ENCODE measurements at regions of chr7 and their contacts with region 1.

Region 1: GRCh38 chr7:143240291-143241168 is 18.7 kb downstream of the TAS2R40 start:
- DNase-seq: no peak
- H3K4me3 ChIP-seq: no peak overlapping the region
- H3K27ac ChIP-seq: peak overlapping the region in 2 of 4 donors; percentile 40 to 72
- H3K4me1 ChIP-seq: peaks cover 0 to 11% (median 2%) of the 10 kb centered on the region in 3 donors
- H3K27me3 ChIP-seq: peaks cover 0 to 4% (median 0%) of the 10 kb centered on the region in 4 donors
- CTCF ChIP-seq: peak; percentile 86 to 92 (median 90)
- POLR2A ChIP-seq: no peak

Region 2: DNA sequence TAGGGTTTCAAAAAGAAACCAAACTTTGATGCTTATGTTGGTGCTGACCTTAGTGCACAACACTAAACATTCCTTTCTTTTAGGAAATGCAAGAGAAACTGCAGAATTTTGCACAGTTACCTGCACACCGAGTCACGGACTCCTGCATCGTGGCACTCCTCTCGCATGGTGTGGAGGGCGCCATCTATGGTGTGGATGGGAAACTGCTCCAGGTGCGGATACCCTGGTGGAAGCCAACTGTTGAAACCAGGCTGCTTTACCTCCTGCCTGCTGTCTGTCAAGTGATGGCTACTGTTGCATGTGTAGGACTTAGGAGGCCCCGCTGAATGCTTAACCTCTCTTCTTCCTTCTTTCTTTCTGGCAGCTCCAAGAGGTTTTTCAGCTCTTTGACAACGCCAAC is 59.3 kb after region 1 on chr7:
- intact Hi-C with region 1: loop called (anchors 5 kb)
- DNase-seq: no peak
- H3K4me3 ChIP-seq: no peak overlapping the region
- H3K27ac ChIP-seq: no peak overlapping the region
- H3K4me1 ChIP-seq: peaks cover 0 to 25% (median 2%) of the 10 kb centered on the region in 3 donors
- H3K27me3 ChIP-seq: no peaks in the 10 kb centered on the region
- CTCF ChIP-seq: peak in 5 of 6 experiments; percentile 36 to 61 (median 48)
- POLR2A ChIP-seq: no peak

Region 3: GRCh38 chr7:143416565-143417149 is 176.1 kb after region 1 on chr7:
- intact Hi-C with region 1: loop called (anchors 5 kb)
- DNase-seq: no peak
- H3K4me3 ChIP-seq: peak overlapping the region in 1 of 4 donors; percentile 6
- H3K27ac ChIP-seq: peak overlapping the region; percentile 70 to 82 (median 76)
- H3K4me1 ChIP-seq: peaks cover 5 to 62% (median 9%) of the 10 kb centered on the region in 3 donors
- H3K27me3 ChIP-seq: no peaks in the 10 kb centered on the region
- CTCF ChIP-seq: peak; percentile 70 to 85 (median 80)
- POLR2A ChIP-seq: no peak

Region 4: DNA sequence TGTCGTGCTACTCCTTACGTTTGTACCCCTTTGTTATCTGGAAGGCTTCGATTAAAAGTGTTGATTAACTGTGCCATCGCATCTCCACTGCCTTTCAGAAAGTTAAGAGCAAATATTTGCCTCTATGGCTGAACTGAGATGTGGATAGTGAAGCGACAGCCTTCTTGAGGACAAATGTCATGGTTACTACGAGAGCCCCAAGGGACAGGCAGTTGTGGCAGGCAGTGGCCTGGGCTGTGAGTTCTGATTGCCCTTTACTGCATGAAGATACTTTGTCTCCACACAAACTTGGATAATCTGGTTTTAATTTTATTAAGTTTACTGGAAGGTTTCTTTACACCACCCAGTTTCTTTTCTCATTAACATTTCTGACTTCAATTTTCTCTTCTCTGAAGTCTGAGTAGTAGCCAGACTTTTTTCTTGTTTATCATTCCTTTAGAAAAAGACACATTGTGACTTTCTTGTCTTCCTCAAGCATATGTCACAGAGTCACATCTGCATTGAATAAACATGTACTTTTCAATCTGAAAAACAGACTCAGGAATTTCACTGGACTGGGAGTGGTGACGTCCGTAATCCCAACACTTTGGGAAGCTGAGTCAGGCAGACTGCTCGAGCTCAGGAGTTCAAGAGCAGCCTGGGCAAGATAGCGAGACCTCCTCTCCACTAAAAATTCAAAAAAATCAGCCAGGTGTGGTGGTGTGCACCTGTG is 238.7 kb after region 1 on chr7:
- intact Hi-C with region 1: no loop called
- DNase-seq: no peak
- H3K4me3 ChIP-seq: no peak overlapping the region
- H3K27ac ChIP-seq: peak overlapping the region in 2 of 4 donors; percentile 56 to 67
- H3K4me1 ChIP-seq: peaks cover 0 to 1% (median 0%) of the 10 kb centered on the region in 3 donors
- H3K27me3 ChIP-seq: no peaks in the 10 kb centered on the region
- CTCF ChIP-seq: no peak
- POLR2A ChIP-seq: no peak

Measured in esophagus squamous epithelium (tissue), 5 donors.